HEK293 (cell line): ENCODE measurements at regions of chr7 and their contacts with region 1.

Region 1: DNA sequence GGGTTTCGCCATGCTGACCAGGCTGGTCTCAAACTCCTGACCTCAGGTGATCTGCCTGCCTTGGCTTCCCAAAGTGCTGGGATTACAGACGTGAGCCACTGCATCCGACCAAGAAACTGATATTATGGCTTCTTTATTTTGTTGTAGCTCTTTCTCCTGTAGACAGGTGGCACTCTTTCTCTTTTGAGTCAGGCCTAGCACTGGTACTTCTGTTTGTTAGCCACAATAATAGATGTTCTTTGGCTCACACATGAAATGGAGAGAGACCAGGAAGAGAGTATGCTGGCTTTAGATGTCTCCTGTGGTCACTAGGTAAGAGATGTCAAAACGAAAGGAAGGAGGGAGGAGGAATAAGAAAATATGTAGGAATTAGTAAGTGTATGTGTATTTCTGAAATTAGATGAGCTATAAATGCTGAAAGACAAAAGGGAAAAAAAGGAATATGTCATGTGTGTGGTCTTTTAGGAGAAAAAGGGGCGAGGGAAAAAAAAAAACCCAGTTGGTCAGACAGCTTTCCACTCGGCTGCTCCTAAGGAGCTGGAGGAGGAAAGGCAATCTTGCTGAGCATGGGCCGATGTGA is 78.7 kb downstream of the CLEC2L start:
- H3K4me3 ChIP-seq: no peak overlapping the region
- H3K27ac ChIP-seq: no peak overlapping the region
- H3K4me1 ChIP-seq: no peaks in the 10 kb centered on the region
- CTCF ChIP-seq: 0 out of 2 replicates have a peak, but pooled peaks have one; percentile 31

Region 2: GRCh38 chr7:139494835-139495579 is 107.2 kb before region 1 on chr7:
- CTCF ChIA-PET with region 1: interaction called, 13 read pairs
- POLR2A ChIA-PET with region 1: no interaction called
- H3K4me3 ChIP-seq: no peak overlapping the region
- H3K27ac ChIP-seq: no peak overlapping the region
- H3K4me1 ChIP-seq: no peaks in the 10 kb centered on the region
- CTCF ChIP-seq: no peak

Region 3: DNA sequence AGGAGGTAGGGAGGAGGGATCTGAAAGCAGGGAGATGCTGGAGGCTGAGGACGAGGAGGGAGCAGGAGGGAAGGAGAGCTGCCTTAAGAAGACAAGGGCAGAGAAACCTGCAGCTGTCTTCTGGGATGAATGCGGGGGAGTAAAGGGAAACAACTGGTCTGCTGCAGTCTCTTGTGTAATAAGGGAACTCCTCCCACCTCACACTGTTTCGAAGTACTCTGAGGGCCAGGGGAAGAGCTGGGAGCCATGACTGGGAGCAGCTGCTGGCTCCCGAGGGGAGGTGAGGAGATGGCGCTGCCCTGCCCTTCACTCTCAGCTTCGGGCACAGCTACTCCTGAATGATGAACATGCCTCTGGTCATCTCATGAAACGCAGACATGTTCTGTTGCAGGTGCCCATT is 13.6 kb before region 1 on chr7:
- CTCF ChIA-PET with region 1: interaction called, 16 read pairs
- POLR2A ChIA-PET with region 1: interaction called, 3 read pairs
- H3K4me3 ChIP-seq: no peak overlapping the region
- H3K27ac ChIP-seq: no peak overlapping the region
- H3K4me1 ChIP-seq: peaks cover 6% of the 10 kb centered on the region
- CTCF ChIP-seq: no peak

Region 4: DNA sequence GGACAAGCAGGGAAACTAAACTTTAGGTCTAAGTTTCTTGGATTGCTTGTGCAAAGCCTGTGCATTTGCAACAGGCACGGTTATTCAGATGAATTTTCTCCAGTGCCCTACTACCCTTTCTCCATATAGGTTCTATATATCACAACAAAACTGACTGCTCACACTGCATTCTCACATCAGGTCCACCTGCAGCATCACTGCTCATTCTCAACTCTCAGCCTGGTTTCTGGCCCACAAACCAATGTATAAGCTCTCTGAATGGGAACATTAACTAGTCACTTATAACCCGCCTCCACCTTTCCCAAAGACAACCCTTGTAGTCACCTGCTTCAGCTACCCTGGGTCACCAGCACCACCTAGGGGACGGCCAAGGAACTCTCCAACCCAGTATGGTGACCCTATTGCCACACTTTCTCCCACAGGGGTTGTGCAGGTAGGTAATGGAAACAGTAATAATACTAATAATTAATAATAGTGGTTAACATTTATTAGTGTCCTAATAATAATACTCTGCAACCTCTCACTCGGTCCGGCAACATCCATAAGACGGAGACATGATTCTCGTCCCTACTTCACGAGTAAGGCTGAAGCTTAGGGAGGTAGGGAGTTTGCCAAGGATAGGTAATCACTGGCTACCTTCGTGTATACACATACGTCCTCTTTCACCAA is 18.6 kb after region 1 on chr7:
- CTCF ChIA-PET with region 1: interaction called, 40 read pairs
- POLR2A ChIA-PET with region 1: no interaction called
- H3K4me3 ChIP-seq: no peak overlapping the region
- H3K27ac ChIP-seq: no peak overlapping the region
- H3K4me1 ChIP-seq: no peaks in the 10 kb centered on the region
- CTCF ChIP-seq: peak; percentile 71